ENCODE measurements at regions of chr10 and their contacts with region 1.

Region 1: DNA sequence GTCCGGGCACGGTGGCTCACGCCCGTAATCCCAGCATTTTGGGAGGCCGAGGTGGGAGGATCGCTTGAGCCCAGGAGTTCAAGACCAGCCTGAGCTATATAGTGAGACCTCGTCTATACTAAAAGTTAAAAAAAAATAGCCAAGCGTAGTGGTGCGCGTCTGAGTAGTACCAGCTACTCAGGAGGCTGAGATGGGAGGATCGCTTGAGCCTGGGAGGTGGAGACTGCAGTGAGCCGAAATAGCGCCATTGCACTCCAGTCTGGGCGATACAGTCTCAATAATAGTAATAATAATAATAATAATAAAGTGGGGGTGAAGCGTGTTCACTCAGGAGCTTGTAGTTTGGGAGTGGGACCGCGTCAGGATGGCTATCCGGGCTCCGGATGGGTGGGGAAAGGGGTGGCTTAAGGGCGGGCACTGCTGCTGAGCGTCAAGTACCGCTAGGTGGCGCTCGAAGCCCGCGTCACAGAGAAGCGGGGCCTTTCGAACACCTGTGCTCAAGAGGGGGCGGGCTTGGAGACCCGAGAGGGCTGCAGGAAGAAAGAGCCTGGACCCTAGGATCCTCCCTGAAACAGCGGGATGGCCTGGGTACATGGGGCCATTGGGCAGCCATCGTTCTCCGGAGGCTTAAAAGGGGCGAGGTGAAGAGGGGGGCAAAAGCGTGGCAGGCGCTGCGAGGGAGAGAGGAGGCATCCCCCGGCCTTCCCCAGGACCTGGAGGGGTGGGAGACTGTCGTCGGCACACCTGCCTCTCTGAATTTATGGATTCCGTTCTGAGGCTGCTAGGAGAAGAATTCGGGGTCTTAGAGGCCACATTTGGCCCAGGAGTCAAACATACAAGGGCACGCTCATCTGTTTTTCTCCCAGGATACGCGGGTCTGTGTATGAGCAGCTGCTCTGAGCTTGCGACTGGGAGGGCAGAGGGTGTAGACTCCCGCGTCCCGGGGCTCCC is 14.5 kb downstream of the LBX1 start:
- DNase-seq: peak; percentile 87

Region 2: DNA sequence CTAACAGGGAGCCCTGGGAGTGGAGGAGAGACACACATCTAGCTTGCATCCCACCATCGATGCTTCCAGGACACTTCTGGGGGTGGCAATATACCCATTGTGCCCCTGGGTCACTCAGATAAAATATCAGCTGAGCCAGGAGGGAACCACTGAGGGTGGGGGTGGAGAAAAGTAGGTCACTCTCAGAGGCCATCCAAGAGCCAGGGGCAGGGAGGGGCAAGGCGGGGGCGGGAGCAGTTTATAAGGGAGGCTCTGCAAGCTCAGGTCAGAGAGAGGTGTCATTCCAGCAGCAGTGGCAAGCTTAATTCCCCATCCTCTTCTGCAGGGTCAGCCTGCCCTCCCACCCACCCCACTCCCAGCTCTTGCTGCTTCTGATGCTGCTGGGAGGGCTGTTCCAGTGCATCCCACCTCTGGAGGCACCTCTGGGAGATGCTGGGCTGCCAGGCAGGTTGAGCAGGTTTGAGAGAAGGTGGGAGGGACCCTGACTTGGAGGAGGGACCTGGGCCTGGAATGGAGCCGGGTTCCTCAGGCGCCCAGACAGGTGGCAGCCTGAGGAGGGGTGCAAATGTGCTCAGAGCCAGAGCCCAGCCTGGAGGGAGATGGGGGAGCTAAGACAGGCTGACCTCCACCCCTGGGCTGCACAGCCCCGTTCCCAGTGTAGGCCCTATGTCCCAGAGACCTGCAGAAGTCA is 103.7 kb before region 1 on chr10:
- CTCF ChIA-PET with region 1: no interaction called
- POLR2A ChIA-PET with region 1: no interaction called
- DNase-seq: no peak

Region 3: GRCh38 chr10:101263150-101263752 is 48.5 kb after region 1 on chr10:
- CTCF ChIA-PET with region 1: interaction called, 12 read pairs
- POLR2A ChIA-PET with region 1: interaction called, 3 read pairs
- DNase-seq: no peak

Region 4: GRCh38 chr10:101297901-101298486 is 83.3 kb after region 1 on chr10:
- CTCF ChIA-PET with region 1: interaction called, 79 read pairs
- POLR2A ChIA-PET with region 1: no interaction called
- DNase-seq: peak; percentile 83

Region 5: DNA sequence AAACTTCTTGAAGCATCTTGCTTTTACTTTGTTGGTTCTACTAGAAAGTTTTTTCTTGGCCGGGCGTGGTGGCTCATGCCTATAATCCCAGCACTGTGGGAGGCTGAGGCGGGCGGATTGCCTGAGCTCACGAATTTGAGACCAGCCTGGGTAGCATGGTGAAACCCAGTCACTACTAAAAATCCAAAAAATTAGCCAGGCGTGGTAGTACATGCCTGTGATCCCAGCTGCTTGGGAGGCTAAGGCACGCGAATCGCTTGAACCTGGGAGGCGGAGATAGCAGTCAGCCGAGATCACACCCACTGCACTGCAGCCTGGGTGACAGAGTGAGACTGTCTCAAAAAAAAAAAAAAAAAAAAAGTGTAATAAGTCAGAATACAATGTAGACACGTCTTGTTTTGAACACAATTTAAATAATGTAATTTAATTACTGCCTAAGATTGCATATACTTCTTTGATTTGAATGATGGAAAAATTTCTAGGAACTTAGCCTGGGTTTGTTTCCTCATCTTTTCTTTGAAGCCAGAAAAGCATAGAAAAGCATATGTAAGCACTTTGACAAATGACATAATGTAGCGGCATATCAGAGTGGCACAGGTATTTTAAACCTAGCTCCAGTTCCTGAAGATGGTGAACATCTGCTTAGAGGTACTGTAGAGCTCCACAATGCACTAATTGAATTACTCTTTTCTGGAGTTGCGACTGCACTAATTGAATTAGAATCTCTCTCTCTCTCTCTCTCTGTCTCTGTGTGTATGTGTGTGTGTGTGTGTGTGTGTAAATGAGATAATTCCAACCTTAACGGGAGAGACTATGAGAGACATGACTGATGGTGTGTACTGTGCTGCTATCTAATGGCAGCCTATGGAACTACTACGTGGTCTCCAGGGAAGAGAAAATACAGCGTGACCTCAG is 227.1 kb after region 1 on chr10:
- CTCF ChIA-PET with region 1: interaction called, 14 read pairs
- POLR2A ChIA-PET with region 1: no interaction called
- DNase-seq: peak; percentile 79

Measured in HEK293T (cell line).